Aorta (tissue), 5 donors: ENCODE measurements at regions of chr7 and their contacts with region 1.

Region 1: GRCh38 chr7:37833107-37833817 is 15.1 kb upstream of the NME8 start:
- DNase-seq: peak in 1 of 2 donors; percentile 62
- ATAC-seq: peak; percentile 82
- H3K4me3 ChIP-seq: peak overlapping the region; percentile 18 to 28
- H3K27ac ChIP-seq: no peak overlapping the region
- H3K4me1 ChIP-seq: peaks cover 0 to 3% of the 10 kb centered on the region in 2 donors
- H3K27me3 ChIP-seq: no peaks in the 10 kb centered on the region

Region 2: DNA sequence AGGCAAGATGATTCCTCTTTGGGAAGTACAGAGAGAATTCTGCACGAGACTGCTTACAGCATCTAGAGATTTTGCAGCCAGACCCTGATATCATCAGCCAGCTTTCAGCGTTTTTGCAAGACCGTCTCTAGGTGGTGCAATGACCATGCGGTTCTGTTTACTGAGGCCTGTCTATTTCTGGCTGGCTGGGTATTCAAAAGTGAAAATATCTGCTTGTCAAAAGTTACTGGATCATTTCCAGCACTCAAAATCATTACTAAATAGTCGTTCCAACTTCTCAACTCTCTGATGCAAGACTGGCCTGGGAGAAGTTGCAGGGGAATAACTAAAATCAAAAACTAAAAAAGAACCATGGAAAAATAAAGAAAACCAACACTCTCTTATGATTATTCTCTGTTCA is 624.7 kb before region 1 on chr7:
- intact Hi-C with region 1: loop called in 1 of 2 experiments (anchors 2 kb)
- DNase-seq: peak in 1 of 2 donors; percentile 78
- ATAC-seq: peak; percentile 94
- H3K4me3 ChIP-seq: no peak overlapping the region
- H3K27ac ChIP-seq: peak overlapping the region in 1 of 2 donors; percentile 68
- H3K4me1 ChIP-seq: no peaks in the 10 kb centered on the region
- H3K27me3 ChIP-seq: no peaks in the 10 kb centered on the region

Region 3: DNA sequence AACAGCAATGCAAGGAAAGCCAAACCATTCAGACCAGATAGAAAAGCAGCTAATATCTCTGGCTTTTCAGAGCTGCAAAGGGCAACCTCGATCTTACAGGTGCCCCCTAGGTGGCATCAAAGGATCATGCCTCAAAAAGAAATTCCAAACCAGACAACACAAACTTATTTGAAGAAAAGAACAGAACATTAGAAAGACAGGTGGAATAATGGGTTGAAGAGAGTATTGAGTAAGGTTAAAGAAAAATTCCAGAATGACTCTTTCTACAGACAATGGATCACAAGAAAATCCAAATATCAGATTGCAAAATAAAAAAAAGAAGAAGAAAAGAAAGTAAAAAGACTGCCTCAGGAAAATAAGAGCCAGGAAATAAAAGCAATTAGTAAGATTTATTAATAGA is 598.3 kb before region 1 on chr7:
- intact Hi-C with region 1: loop called (anchors 2 to 10 kb)
- DNase-seq: no peak
- ATAC-seq: no peak
- H3K4me3 ChIP-seq: no peak overlapping the region
- H3K27ac ChIP-seq: no peak overlapping the region
- H3K4me1 ChIP-seq: no peaks in the 10 kb centered on the region
- H3K27me3 ChIP-seq: peaks cover 0 to 2% of the 10 kb centered on the region in 2 donors

Region 4: DNA sequence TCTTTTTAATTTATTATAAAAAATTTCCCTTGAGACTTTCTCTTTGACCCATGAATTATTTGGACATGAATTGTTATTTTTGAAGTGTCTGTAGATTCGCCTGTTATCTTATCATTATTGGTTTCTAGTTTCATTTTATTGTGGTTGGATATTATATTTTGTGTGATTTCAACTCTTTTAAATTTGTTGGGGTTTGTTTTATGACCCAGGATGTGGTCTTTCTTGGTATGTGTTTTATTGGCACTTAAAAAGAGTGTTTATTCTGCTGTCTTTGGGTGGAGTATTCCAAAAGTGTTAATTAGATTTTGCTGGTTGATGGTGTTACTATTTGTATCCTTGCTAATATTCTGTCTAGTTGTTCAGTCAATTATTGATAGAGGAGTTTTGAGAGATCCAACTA is 200.2 kb before region 1 on chr7:
- intact Hi-C with region 1: loop called (anchors 5 kb)
- DNase-seq: no peak
- ATAC-seq: no peak
- H3K4me3 ChIP-seq: no peak overlapping the region
- H3K27ac ChIP-seq: no peak overlapping the region
- H3K4me1 ChIP-seq: no peaks in the 10 kb centered on the region
- H3K27me3 ChIP-seq: no peaks in the 10 kb centered on the region